Heart left ventricle (tissue), 16 donors: ENCODE measurements at regions of chr17 and their contacts with region 1.

Region 1: DNA sequence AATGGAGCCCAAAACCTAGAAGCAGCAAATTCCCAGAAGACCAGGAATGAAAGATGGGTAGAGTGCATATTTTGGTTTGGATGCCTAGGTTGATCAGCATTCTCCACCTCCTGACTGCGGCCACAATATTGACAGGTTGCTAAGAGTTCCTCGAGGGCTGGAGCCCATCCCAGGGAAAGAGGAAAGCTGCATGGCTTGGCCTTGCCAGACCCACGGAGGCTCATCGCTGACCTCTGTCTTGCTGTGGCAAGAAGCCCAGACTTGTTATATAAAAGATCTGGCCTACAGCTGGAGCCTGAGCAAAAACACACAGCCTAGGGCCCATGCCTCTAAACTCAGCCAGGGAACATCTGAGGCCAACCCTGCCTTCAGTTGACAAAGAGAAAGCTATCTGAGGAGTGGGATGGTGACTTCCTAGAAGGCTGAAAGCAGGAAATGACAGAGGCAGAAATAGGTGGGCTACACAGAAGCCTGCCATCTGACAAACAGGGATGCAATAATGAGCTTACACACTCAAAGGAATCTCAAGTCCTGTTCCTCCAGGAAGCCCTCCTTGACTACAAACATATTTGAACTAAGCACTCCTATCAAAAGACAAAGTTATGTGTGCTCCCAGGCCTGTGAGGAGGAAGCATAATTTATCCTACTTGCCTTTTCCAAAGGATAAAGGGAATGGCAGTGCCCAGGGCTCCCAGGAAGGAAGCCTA is 22.5 kb upstream of the SLC35B1 start:
- DNase-seq: peak; percentile 84 to 95 (median 91)
- ATAC-seq: peak; percentile 96 to 97 (median 97)
- H3K4me3 ChIP-seq: no peak overlapping the region
- H3K27ac ChIP-seq: peak overlapping the region; percentile 35 to 94 (median 76)
- H3K4me1 ChIP-seq: peaks cover 4 to 72% (median 52%) of the 10 kb centered on the region in 12 donors
- H3K27me3 ChIP-seq: no peaks in the 10 kb centered on the region
- CTCF ChIP-seq: no peak
- POLR2A ChIP-seq: no peak

Region 2: GRCh38 chr17:49496183-49496866 is 233.9 kb before region 1 on chr17:
- intact Hi-C with region 1: no loop called
- DNase-seq: peak; percentile 76 to 90 (median 82)
- ATAC-seq: peak; percentile 63 to 88 (median 79)
- H3K4me3 ChIP-seq: peak overlapping the region; percentile 29 to 76 (median 56)
- H3K27ac ChIP-seq: peak overlapping the region in 3 of 12 donors; percentile 5 to 32 (median 22)
- H3K4me1 ChIP-seq: peaks cover 0 to 38% (median 25%) of the 10 kb centered on the region in 12 donors
- H3K27me3 ChIP-seq: peaks cover 17 to 70% (median 49%) of the 10 kb centered on the region in 9 donors
- CTCF ChIP-seq: peak; percentile 68 to 94 (median 88)
- POLR2A ChIP-seq: no peak

Region 3: GRCh38 chr17:49515196-49515770 is 214.9 kb before region 1 on chr17:
- intact Hi-C with region 1: no loop called
- DNase-seq: peak; percentile 90 to 97 (median 93)
- ATAC-seq: peak; percentile 93 to 98 (median 98)
- H3K4me3 ChIP-seq: no peak overlapping the region
- H3K27ac ChIP-seq: peak overlapping the region; percentile 38 to 90 (median 74)
- H3K4me1 ChIP-seq: peaks cover 0 to 45% (median 26%) of the 10 kb centered on the region in 12 donors
- H3K27me3 ChIP-seq: peaks cover 0 to 5% (median 0%) of the 10 kb centered on the region in 9 donors
- CTCF ChIP-seq: peak in 7 of 12 donors; percentile 22 to 59 (median 42)
- POLR2A ChIP-seq: no peak

Region 4: GRCh38 chr17:49556223-49556971 is 173.8 kb before region 1 on chr17:
- intact Hi-C with region 1: no loop called
- DNase-seq: peak; percentile 65 to 88 (median 74)
- ATAC-seq: peak; percentile 69 to 93 (median 88)
- H3K4me3 ChIP-seq: no peak overlapping the region
- H3K27ac ChIP-seq: no peak overlapping the region
- H3K4me1 ChIP-seq: peaks cover 0 to 8% (median 4%) of the 10 kb centered on the region in 12 donors
- H3K27me3 ChIP-seq: peaks cover 0 to 9% (median 0%) of the 10 kb centered on the region in 9 donors
- CTCF ChIP-seq: peak; percentile 95 to 100 (median 98)
- POLR2A ChIP-seq: no peak

Region 5: DNA sequence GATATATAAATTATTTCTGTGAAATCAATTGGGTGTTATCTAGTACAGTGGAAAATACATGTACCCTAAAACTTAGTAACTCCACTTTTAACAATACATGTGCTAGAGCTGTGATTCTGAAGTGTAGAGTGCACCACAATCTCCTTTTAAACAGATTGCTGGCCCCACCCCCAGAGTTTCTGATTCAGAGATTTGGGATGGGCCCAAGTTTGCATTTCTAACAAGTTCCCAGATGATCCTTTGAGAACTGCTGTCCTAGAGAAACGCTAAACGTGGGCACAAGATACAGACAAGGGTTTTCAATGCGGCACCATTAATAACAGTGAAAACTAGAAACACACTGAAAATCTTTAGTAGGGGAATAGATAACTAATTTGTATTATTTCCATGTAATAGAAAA is 105.3 kb before region 1 on chr17:
- intact Hi-C with region 1: no loop called
- DNase-seq: no peak
- ATAC-seq: peak in 2 of 4 donors; percentile 31 to 46
- H3K4me3 ChIP-seq: no peak overlapping the region
- H3K27ac ChIP-seq: peak overlapping the region in 1 of 12 donors; percentile 73
- H3K4me1 ChIP-seq: peaks cover 4 to 76% (median 38%) of the 10 kb centered on the region in 12 donors
- H3K27me3 ChIP-seq: no peaks in the 10 kb centered on the region
- CTCF ChIP-seq: no peak
- POLR2A ChIP-seq: no peak

Region 6: DNA sequence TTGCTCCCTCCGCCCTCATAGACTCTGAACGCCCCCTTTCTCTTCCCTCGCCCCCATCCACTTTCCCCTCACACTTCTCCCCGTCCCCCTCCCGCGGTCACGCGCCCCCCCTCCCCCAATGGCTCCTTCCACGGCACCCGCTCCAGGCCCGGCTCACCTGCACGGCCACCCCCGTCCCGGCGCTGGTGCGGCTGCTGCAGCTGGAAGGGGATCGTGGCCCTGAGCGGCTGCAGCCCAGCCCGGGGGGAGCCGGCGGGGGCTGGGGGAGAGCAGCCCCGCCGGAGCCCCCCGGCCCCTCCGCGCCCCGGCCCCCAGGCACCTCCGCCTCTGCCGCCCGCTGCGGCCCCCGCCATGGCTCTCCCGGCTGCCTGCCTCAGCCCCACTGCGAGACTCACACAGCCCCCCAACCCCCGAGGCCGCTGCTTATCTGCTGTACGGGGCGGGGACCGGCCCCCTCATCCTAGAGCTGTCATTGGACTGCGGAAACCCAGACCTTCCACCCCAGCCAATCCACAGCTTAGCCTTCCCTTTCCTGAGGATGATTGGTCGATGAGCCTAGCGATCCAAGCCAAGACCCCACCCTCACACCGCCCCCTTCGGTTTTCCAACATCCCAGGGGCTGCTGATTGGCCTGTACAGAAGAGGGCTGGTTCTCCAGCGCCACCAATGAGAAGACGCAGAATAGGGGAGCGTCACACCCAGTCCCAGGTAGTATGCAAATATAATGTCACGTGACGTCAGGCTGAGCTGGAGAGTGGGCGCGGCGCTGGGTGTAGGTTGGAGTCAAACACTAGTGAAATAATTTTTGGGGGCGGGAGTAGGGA is 33.7 kb after region 1 on chr17 and contains the start of gene FAM117A:
- intact Hi-C with region 1: loop called in 1 of 10 experiments (anchors 5 kb)
- DNase-seq: peak; percentile 94 to 97 (median 97)
- ATAC-seq: peak; percentile 99
- H3K4me3 ChIP-seq: peak within 1 kb of the TSS; percentile 67 to 96 (median 74)
- H3K27ac ChIP-seq: peak within 1 kb of the TSS in 11 of 12 donors; percentile 46 to 89 (median 68)
- H3K4me1 ChIP-seq: peaks cover 0 to 45% (median 17%) of the 10 kb centered on the region in 12 donors
- H3K27me3 ChIP-seq: no peaks in the 10 kb centered on the region
- CTCF ChIP-seq: no peak
- POLR2A ChIP-seq: peak in 1 of 2 donors; percentile 66
- total RNA-seq, gene FAM117A: 5.9 to 18.5 (median 14.9) TPM

Region 7: DNA sequence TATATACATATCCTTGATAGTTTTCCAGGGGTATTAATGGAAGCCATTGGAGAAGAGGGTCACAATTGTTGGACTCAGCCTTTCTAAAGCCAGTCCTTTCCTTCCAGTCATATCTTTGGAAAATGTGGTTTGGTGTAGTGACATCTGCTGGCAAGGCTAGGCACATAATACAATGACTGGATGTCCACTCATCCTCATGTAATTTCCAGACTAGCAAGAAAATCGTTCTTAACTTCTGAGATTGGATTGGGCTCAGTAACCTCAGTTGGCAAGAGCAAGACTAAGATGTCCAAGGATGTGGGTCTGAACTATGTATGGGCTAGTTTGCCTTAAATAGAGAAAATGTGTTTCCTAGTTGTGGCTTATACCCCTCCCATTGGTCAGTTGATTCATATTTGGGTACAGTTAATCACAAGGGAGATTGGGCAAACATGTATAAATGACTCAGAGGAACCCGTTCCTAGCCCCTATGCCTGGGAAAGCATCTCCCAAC is 49.6 kb after region 1 on chr17:
- intact Hi-C with region 1: loop called in 1 of 10 experiments (anchors 2 kb)
- DNase-seq: peak in 1 of 5 donors; percentile 36
- ATAC-seq: peak; percentile 28 to 67 (median 56)
- H3K4me3 ChIP-seq: no peak overlapping the region
- H3K27ac ChIP-seq: peak overlapping the region in 4 of 12 donors; percentile 8 to 38 (median 32)
- H3K4me1 ChIP-seq: peaks cover 0 to 58% (median 31%) of the 10 kb centered on the region in 12 donors
- H3K27me3 ChIP-seq: no peaks in the 10 kb centered on the region
- CTCF ChIP-seq: peak; percentile 31 to 74 (median 62)
- POLR2A ChIP-seq: no peak